Dorsolateral prefrontal cortex (tissue), 120 donors: ENCODE measurements at regions of chr6 and their contacts with region 1.

Region 1: DNA sequence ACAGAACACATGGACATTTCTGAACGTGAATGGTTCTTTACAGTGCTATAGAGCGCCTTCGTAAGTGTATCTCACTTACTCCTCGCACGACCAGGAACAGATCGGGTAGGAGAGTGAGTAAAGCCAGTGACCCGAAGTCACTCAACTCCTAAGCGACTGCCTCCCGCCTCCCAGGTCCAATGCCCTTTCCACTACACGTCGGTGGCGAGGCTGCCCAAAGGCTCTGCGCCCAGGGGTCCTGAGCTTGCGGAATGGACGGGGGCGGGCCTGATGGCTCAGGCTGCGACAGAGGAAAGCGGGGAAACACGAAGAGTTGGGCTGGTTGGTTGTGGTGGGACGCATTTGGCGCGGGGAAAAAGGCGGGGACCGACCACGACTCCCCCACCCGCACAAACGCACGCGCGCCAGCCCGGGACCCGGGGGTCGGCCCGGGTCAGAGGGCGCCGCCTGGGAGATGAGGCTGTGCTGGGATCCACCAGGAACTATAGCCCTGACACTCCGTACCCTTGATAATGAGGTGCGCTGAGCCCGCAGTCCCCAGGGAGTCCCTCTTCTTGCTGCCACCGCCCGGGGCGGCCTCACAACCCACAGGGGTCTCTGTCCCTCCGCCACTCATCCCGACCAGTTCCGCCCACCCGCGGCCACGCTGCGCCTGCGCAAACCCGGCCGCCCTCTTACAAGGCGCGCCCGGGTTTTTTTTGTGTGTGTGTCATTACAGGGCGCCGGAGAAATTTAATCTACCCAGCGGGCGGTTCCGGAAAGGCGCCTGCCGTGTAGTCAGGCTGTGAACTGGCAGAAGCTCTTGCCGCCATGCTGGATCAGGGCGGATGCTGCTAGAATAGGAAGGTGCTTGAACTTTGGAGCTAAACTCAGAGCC is at the start of gene BLOC1S5:
- DNase-seq: peak; percentile 89 to 97 (median 96)
- H3K4me3 ChIP-seq: peak within 1 kb of the TSS; percentile 67 to 98 (median 87)
- H3K27ac ChIP-seq: peak within 1 kb of the TSS; percentile 58 to 96 (median 90)
- H3K27me3 ChIP-seq: no peaks in the 10 kb centered on the region
- CTCF ChIP-seq: peak in 44 of 56 donors; percentile 18 to 63 (median 38)
- total RNA-seq, gene BLOC1S5: 5.4 to 16.1 (median 9.1) TPM

Region 2: GRCh38 chr6:7673063-7673536 is 390.9 kb before region 1 on chr6:
- intact Hi-C with region 1: no loop called
- DNase-seq: no peak
- H3K4me3 ChIP-seq: peak overlapping the region in 7 of 59 donors; percentile 4 to 40 (median 19)
- H3K27ac ChIP-seq: no peak overlapping the region
- H3K27me3 ChIP-seq: peaks cover 0 to 33% (median 8%) of the 10 kb centered on the region in 45 donors
- CTCF ChIP-seq: no peak

Region 3: DNA sequence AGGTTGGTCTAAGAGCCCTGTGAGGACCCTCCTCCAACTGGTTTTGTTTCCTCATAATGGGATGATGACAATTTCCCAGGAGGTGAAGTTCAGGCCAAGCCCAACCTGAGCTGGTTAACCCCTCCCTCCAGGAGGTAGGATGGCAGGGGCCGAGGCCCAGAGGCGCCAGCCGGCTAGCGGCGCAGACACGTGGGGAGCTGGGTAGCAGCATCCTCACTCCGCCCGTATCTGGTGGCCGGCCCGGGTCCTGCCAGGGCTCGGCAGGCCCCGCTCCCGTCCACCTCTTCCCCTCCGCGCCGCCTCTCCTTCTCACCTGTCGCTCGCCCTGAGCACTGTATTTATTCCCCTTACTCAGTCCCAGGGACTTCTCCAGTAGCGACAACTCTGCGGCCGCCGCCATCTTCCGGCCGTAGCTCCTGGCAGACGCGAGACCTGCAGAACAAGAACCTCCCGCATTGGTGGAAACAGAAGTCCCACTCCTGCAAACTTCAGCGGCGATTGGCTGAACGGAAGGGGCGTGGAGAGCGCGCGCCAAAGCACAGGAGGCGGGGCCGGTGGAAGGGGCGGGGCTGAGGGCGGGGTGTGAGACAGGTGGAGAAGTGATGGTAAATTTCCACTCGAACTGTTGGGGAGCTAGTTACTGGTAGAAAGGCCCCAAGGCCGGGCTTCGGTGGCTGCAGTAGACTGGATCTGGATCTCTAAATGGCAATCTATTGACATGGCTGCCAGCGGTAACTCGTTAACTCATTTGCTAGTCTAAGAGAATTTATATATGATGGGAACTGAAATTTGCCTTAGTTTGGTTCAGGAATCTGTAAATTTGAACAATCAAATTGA is 38.3 kb after region 1 on chr6 and contains the start of gene EEF1E1:
- intact Hi-C with region 1: loop called in 1 of 2 experiments (anchors 2 kb)
- DNase-seq: peak; percentile 88 to 97 (median 96)
- H3K4me3 ChIP-seq: peak within 1 kb of the TSS; percentile 74 to 99 (median 93)
- H3K27ac ChIP-seq: peak within 1 kb of the TSS in 35 of 59 donors; percentile 14 to 89 (median 61)
- H3K27me3 ChIP-seq: peaks cover 0 to 9% (median 0%) of the 10 kb centered on the region in 45 donors
- CTCF ChIP-seq: peak in 21 of 56 donors; percentile 5 to 48 (median 23)
- total RNA-seq, gene EEF1E1: 10.6 to 36.7 (median 24.2) TPM